Ascending aorta (tissue), 2 donors: ENCODE measurements at regions of chr12 and their contacts with region 1.

Region 1: GRCh38 chr12:56041552-56042429 is at the start of gene RPS26:
- DNase-seq: peak; percentile 92 to 98
- H3K4me3 ChIP-seq: peak within 1 kb of the TSS; percentile 72 to 81
- H3K27ac ChIP-seq: peak within 1 kb of the TSS; percentile 82 to 93
- H3K4me1 ChIP-seq: peaks cover 5 to 11% of the 10 kb centered on the region in 2 donors
- H3K27me3 ChIP-seq: no peaks in the 10 kb centered on the region
- CTCF ChIP-seq: peak in 2 of 3 experiments; percentile 43 to 64
- total RNA-seq, gene RPS26: 877 TPM

Region 2: DNA sequence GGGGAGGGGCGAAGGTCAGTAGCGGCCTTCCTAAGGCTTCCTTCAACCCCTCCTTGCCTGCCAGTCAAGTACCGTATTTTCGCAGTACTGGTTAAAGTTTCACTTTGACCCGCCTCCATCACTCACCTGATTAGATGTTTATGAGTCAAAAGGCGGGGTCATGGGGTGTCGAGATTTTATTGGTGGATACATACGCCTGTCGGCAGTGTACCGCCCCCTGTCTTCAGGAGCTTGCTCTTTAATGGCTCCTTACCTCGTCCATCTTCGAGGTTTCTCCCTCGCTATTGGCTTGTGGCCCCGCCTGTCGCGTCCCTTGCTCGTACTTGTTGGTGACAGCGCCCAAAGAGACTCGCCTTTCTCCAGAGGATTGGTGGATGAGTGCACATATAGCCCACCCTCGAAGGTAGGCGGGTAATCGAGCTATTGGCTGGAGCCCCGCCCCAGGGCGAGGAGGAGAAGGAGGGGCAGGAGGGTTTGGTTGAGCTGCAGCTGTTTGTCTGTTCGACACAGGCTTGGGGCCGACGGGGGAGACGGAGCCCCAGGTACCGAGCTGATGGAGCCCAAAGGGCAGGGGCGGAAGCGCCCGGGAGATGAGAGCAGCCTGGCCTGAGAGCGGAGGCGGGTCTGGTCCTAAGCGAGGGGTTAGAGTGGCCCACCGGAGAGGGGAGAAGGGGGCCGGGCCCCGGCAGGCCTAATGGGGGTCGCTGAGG is 68.0 kb before region 1 on chr12 and contains the start of gene RAB5B:
- intact Hi-C with region 1: loop called (anchors 2 kb)
- DNase-seq: peak; percentile 100
- H3K4me3 ChIP-seq: peak within 1 kb of the TSS; percentile 87
- H3K27ac ChIP-seq: peak within 1 kb of the TSS; percentile 89 to 95
- H3K4me1 ChIP-seq: peaks cover 3 to 18% of the 10 kb centered on the region in 2 donors
- H3K27me3 ChIP-seq: no peaks in the 10 kb centered on the region
- CTCF ChIP-seq: no peak
- total RNA-seq, gene RAB5B: 48.0 TPM

Region 3: GRCh38 chr12:56007564-56008559 is 33.9 kb before region 1 on chr12:
- intact Hi-C with region 1: loop called (anchors 2 kb)
- DNase-seq: peak in 1 of 2 donors; percentile 70
- H3K4me3 ChIP-seq: peak overlapping the region; percentile 78 to 98
- H3K27ac ChIP-seq: peak overlapping the region; percentile 93 to 97
- H3K4me1 ChIP-seq: peaks cover 0 to 2% of the 10 kb centered on the region in 2 donors
- H3K27me3 ChIP-seq: no peaks in the 10 kb centered on the region
- CTCF ChIP-seq: no peak

Region 4: DNA sequence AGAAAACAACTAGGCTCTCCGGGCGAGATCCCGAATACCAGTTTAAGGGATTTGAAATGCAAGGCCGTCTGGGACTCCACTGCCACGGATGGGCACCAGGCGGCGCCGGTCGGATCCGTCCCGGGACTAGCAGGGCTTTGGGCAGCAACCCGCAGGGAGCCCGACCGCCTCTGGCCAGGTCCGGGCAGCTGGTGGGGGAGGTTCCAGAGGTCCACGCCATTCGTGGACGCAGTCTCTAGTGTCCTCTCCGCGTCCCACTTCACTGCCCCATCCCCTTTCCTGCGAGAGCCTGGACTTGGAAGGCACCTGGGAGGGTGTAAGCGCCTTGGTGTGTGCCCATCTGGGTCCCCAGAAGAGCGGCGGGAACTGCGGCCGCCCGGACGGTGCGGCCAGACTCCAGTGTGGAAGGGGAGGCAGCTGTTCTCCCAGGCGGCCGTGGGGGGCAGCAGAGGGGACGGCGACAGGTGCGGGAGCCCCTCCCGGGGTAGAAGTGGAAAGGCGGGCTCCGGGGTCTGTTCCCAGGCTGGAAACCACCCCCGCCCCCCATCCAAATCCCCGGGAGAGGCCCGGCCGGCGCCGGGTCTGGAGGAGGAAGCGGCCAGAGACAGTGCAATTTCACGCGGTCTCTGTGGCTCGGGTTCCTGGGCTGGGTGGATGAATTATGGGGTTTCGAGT is 37.3 kb after region 1 on chr12:
- intact Hi-C with region 1: no loop called
- DNase-seq: peak; percentile 53 to 94
- H3K4me3 ChIP-seq: peak overlapping the region; percentile 72 to 86
- H3K27ac ChIP-seq: peak overlapping the region; percentile 75 to 81
- H3K4me1 ChIP-seq: peaks cover 5 to 7% of the 10 kb centered on the region in 2 donors
- H3K27me3 ChIP-seq: no peaks in the 10 kb centered on the region
- CTCF ChIP-seq: peak; percentile 65 to 82 (median 77)

Region 5: DNA sequence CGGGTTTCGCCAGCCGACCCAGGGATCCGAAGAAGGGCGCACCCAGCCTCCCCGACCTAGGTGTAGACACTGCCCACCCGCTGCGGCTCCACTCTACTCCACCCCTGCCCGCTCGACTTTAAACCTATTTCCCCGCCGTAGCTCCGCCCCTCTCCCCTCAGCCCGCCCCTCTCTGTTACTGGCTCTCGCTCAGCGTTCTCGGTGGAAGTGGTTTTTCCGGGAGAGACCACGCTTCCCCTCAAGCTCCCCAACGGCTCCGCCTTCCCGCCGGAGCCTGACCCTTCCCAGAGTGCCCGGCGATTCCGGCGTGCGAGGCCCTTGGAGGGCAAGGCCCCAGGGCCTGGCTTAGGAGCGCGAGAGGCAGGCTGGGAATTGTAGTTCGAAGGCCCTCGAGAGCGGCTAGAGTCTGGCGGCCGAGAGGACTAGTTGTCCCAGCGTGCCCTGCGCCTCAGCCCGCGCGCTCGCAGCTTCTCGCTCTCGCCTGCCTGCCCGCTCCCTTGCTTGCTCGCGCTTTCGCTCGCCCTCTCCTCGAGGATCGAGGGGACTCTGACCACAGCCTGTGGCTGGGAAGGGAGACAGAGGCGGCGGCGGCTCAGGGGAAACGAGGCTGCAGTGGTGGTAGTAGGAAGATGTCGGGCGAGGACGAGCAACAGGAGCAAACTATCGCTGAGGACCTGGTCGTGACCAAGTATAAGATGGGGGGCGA is 62.5 kb after region 1 on chr12 and contains the start of gene PA2G4:
- intact Hi-C with region 1: loop called (anchors 1 kb)
- DNase-seq: peak; percentile 92 to 99
- H3K4me3 ChIP-seq: peak within 1 kb of the TSS; percentile 69 to 88
- H3K27ac ChIP-seq: peak within 1 kb of the TSS; percentile 77 to 83
- H3K4me1 ChIP-seq: peaks cover 0 to 13% of the 10 kb centered on the region in 2 donors
- H3K27me3 ChIP-seq: no peaks in the 10 kb centered on the region
- CTCF ChIP-seq: no peak
- total RNA-seq, gene PA2G4: 101 TPM

Region 6: GRCh38 chr12:56258057-56258819 is 216.4 kb after region 1 on chr12 and contains the start of gene ANKRD52:
- intact Hi-C with region 1: no loop called
- DNase-seq: peak in 1 of 2 donors; percentile 82
- H3K4me3 ChIP-seq: peak within 1 kb of the TSS; percentile 69 to 89
- H3K27ac ChIP-seq: peak within 1 kb of the TSS; percentile 75 to 89
- H3K4me1 ChIP-seq: peaks cover 3 to 19% of the 10 kb centered on the region in 2 donors
- H3K27me3 ChIP-seq: no peaks in the 10 kb centered on the region
- CTCF ChIP-seq: peak; percentile 24 to 95 (median 33)
- total RNA-seq, gene ANKRD52: 17.5 TPM